Endothelial cell of umbilical vein (primary cell): ENCODE measurements at regions of chr15 and their contacts with region 1.

Region 1: DNA sequence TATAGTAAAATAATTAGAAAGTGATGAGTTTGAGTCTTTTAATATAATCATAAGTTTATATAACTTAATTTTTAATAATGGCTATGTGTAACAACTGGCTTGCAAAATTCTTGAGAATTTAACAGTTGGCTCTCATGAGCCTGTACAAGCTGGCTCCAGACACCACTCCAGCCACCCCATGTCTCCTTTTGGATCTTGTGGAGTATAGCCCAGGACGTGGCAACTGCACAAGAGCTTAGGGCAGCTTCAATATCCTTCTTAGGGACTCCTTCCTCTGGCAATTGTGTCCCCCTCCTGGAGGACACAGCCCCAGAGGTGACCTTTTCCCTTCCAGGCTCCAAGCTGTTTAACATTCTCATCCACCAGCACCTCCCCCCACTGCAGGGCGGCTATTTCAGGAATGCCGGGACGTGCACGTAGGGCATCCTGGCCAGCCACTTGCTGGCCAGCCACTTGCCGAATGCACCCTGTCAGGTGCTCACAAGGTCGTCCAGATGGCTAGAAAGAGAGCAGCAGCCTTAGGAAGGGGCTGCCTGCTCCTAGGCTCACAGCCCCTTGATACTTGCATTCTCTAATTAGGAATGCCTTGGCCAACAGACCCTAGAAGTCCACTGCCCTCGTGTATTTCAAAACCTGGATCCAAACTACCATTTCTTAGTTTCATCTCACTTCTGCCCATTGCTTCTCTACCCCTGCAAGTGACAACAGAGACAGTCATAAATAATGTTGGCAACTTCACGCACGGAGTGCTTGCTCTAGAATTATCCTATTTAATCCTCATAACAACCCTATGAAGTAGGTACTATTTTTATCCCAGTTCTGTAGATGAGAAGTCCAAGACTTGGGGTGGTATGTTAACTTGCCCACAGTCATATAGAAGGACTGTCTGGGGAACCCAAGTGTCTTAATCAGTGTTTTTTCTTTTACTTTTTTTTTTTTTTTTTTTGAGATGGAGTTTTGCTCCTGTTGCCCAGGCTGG is 24.5 kb upstream of the IDH2 start:
- DNase-seq: no peak
- H3K4me3 ChIP-seq: no peak overlapping the region
- H3K27ac ChIP-seq: no peak overlapping the region
- H3K4me1 ChIP-seq: no peaks in the 10 kb centered on the region
- H3K27me3 ChIP-seq: peaks cover 0 to 10% of the 10 kb centered on the region in 2 experiments
- CTCF ChIP-seq: no peak
- POLR2A ChIP-seq: no peak

Region 2: GRCh38 chr15:90101969-90102890 is 24.5 kb before region 1 on chr15 and contains the start of gene IDH2:
- CTCF ChIA-PET with region 1: interaction called, 4 read pairs
- POLR2A ChIA-PET with region 1: no interaction called
- dilution Hi-C with region 1: no loop called
- intact Hi-C with region 1: loop called (anchors 1 kb)
- DNase-seq: peak; percentile 87
- H3K4me3 ChIP-seq: peak within 1 kb of the TSS; percentile 72 to 83 (median 76)
- H3K27ac ChIP-seq: peak within 1 kb of the TSS; percentile 73
- H3K4me1 ChIP-seq: peaks cover 26% of the 10 kb centered on the region
- H3K27me3 ChIP-seq: no peaks in the 10 kb centered on the region
- CTCF ChIP-seq: no peak
- POLR2A ChIP-seq: peak; percentile 95
- total RNA-seq, gene IDH2: 127 and 133 TPM in 2 replicates

Region 3: GRCh38 chr15:90233376-90234095 is 106.8 kb after region 1 on chr15 and contains the start of gene CIB1:
- CTCF ChIA-PET with region 1: no interaction called
- POLR2A ChIA-PET with region 1: no interaction called
- dilution Hi-C with region 1: no loop called
- intact Hi-C with region 1: no loop called
- DNase-seq: peak; percentile 98
- H3K4me3 ChIP-seq: peak within 1 kb of the TSS; percentile 77 to 93 (median 82)
- H3K27ac ChIP-seq: peak within 1 kb of the TSS; percentile 69
- H3K4me1 ChIP-seq: peaks cover 18% of the 10 kb centered on the region
- H3K27me3 ChIP-seq: no peaks in the 10 kb centered on the region
- CTCF ChIP-seq: peak in 1 of 2 donors; percentile 34
- POLR2A ChIP-seq: peak; percentile 67
- total RNA-seq, gene CIB1: 58.3 and 61.0 TPM in 2 replicates